ENCODE measurements at regions of chr2 and their contacts with region 1.

Region 1: DNA sequence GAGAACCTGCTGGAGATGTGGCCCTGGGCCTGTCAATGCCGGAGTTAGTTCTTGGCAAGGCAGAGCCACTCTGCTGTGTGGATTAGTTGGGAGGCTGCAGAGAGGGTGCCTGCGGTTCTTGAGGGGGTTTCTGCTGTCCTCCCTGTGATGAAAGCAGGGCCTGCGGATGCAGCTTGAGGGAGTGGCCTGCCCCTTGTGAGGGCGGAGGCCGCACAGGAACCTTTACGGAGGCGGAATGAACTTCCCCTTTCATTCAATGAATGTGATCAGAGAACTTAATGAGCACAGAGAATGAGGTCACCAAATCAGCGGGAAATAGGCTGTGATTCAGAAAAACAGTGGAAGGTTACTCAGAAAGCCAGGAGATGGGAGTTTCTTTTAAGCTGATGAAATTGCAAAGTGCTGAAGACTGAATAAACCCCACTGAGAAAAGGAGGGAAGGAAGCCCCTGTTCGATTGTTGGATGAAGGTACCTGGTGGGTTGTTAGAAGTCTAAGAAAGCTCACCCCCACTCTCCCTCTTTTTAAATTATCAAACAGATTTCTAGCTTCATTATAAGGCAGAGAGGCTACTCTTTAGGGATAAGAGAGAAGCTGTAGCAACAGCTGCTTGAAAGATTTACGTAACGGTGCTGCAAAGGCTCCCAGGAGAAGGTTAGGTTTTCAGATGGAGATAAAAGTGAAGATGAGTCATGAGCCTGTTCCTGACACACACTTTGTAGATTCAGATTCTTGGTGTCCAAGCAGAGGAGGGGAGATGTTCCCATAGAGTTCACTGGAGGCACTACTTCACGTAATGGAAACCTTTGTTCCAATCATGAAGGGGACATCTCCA is 47.4 kb downstream of the VWA3B start:
- DNase-seq: no peak
- ATAC-seq: no peak
- H3K4me3 ChIP-seq: no peak overlapping the region
- H3K27ac ChIP-seq: no peak overlapping the region
- H3K4me1 ChIP-seq: no peaks in the 10 kb centered on the region
- H3K27me3 ChIP-seq: no peaks in the 10 kb centered on the region

Region 2: DNA sequence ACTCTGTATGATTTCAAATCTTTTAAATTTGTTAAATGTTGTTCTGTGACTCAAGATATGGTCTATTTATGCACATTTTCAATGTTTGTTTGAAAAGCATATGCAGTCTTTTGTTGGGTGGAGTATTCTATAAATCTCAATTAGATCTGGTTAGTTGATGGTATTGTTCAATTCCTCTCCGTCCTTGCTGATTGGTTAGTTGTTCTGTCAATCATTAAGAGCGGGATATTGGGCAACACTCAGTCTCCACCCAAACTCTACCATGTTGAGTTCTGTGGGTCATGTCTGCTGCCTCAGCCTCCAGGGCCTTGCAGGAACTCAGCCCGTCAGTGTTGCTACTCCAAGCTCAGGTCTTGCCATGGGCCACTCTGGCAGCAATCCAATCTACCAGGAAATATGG is 71.5 kb after region 1 on chr2:
- intact Hi-C with region 1: loop called in 1 of 2 experiments (anchors 10 kb)
- DNase-seq: no peak
- ATAC-seq: no peak
- H3K4me3 ChIP-seq: no peak overlapping the region
- H3K27ac ChIP-seq: no peak overlapping the region
- H3K4me1 ChIP-seq: no peaks in the 10 kb centered on the region
- H3K27me3 ChIP-seq: no peaks in the 10 kb centered on the region